Heart right ventricle (tissue), 16 donors: ENCODE measurements at regions of chr1 and their contacts with region 1.

Region 1: DNA sequence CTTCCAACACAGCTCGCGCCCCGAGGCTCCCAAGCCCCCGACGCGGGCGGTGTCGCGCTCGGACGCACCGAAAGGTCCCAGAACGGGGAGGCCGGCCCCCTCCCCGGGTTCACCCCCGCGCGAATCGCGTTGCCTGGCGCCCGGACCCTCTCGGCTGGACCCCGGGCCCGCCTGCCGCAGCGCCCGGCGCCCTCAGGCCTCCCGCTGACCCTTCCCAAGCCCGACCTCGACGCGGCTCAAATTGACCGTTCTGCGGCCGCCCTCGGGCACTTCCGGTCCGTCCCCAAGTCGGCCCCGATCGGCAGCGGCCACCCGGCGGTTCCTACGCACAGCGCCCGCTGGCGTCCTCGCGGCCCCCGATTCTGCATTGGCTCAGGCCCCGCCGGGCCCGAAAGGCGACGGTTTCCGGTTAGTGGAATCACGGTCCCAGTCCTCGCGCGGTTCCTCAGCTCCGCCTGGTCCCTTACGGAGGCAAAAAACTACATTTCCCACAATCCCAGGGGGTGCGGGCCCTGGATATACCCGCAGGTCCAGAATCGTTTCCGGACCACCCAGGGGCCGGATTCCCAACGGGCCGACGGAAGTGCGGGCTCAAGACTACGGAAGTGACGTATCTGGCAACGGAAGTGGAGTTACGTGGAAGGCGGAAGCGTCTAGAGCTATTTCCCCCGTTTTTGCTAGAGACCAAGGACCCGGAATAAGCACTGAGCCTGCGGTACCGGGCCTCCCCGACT is at the start of gene AURKAIP1:
- DNase-seq: peak; percentile 96 to 99
- ATAC-seq: peak; percentile 93 to 98 (median 97)
- H3K4me3 ChIP-seq: peak within 1 kb of the TSS; percentile 76 to 100 (median 93)
- H3K27ac ChIP-seq: peak within 1 kb of the TSS; percentile 79 to 99 (median 96)
- H3K4me1 ChIP-seq: peaks cover 16 to 45% (median 38%) of the 10 kb centered on the region in 9 donors
- H3K27me3 ChIP-seq: no peaks in the 10 kb centered on the region
- CTCF ChIP-seq: peak in 7 of 9 donors; percentile 27 to 54 (median 31)
- total RNA-seq, gene AURKAIP1: 176 to 251 (median 193) TPM

Region 2: DNA sequence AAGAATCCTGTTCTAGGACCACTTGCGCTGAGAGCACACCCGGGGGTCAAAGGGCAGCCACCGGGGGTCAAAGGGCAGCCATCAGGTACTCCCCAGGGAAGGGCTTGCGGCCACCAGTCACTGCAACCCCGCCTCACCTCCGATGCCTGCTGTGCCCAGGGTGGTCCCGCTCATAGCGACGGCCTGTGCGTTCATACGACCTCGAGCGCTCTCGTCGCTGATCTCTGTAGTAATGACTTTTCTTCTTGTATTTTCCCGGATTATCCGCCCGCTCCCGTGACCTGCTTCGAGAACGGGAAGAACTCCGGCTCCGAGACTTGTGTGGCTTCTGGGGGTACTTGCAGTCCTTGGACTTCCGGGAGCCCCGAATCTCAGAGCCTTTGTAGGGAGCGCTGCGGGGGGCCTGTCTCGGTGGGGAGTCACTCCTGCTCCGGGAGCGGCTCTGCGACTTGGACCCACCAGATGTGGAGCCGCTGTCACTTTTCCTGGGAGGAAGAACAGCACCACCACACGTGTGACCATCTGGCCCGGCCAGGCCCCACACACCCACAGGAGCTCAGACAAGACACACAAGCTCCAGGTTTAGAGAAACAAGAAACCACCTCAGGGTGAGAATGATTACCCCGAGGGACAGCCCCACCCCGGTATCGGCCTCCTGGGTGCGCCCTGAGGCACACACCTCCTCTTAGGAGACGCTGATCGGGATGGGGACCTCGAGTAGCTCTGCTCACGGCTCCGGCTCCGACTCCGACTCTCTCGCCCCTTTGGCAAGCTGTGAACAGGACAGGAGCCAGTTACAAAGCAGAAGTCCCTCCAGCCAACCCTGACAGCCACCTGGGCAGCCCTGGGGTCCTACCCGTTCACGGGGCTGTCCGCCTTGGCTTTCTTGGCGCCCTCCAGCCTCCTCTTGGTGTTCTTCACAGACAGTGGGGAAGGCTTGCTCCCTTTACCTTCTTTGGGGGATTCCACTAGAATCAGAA is 12.3 kb after region 1 on chr1:
- intact Hi-C with region 1: no loop called
- DNase-seq: no peak
- ATAC-seq: peak in 1 of 8 donors; percentile 20
- H3K4me3 ChIP-seq: no peak overlapping the region
- H3K27ac ChIP-seq: no peak overlapping the region
- H3K4me1 ChIP-seq: peaks cover 0 to 18% (median 9%) of the 10 kb centered on the region in 9 donors
- H3K27me3 ChIP-seq: no peaks in the 10 kb centered on the region
- CTCF ChIP-seq: no peak

Region 3: GRCh38 chr1:1419642-1420384 is 44.7 kb after region 1 on chr1:
- intact Hi-C with region 1: loop called in 1 of 10 experiments (anchors 1 kb)
- DNase-seq: no peak
- ATAC-seq: peak; percentile 52 to 82 (median 67)
- H3K4me3 ChIP-seq: peak overlapping the region in 9 of 10 donors; percentile 35 to 58 (median 47)
- H3K27ac ChIP-seq: peak overlapping the region in 9 of 10 donors; percentile 51 to 85 (median 78)
- H3K4me1 ChIP-seq: peaks cover 0 to 23% (median 8%) of the 10 kb centered on the region in 9 donors
- H3K27me3 ChIP-seq: peaks cover 0 to 18% (median 0%) of the 10 kb centered on the region in 7 donors
- CTCF ChIP-seq: peak in 2 of 9 donors; percentile 11 to 23

Region 4: GRCh38 chr1:1441002-1441888 is 66.1 kb after region 1 on chr1:
- intact Hi-C with region 1: no loop called
- DNase-seq: peak in 1 of 2 donors; percentile 72
- ATAC-seq: peak; percentile 68 to 85 (median 77)
- H3K4me3 ChIP-seq: peak overlapping the region in 1 of 10 donors; percentile 21
- H3K27ac ChIP-seq: no peak overlapping the region
- H3K4me1 ChIP-seq: peaks cover 8 to 32% (median 19%) of the 10 kb centered on the region in 9 donors
- H3K27me3 ChIP-seq: peaks cover 0 to 24% (median 4%) of the 10 kb centered on the region in 7 donors
- CTCF ChIP-seq: peak; percentile 80 to 95 (median 90)

Region 5: DNA sequence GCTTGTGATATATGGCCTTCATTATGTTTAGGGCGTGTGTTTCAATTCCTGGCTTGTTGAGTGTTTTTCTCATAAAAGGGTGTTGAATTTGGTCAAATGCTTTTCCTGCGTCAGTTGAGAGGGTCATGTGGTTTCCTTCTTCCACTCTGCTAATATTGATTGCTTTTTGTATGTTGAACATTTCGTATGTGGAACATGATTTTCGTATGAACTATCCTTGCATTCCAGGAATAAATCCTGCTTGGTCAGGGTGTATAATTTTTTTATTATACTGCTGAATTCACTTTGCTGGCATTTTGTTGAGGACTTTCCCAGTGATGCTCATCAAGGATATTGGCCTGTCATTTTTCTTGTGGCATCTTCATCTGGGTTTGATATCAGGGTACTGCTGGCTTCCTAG is 132.2 kb after region 1 on chr1:
- intact Hi-C with region 1: loop called in 1 of 10 experiments (anchors 10 kb)
- DNase-seq: no peak
- ATAC-seq: no peak
- H3K4me3 ChIP-seq: no peak overlapping the region
- H3K27ac ChIP-seq: no peak overlapping the region
- H3K4me1 ChIP-seq: peaks cover 7 to 35% (median 17%) of the 10 kb centered on the region in 9 donors
- H3K27me3 ChIP-seq: no peaks in the 10 kb centered on the region
- CTCF ChIP-seq: no peak